T-cell (primary cell): ENCODE measurements at regions of chr1 and their contacts with region 1.

Region 1: GRCh38 chr1:110048923-110049601 is 14.6 kb downstream of the STRIP1 start:
- DNase-seq: no peak
- ATAC-seq: no peak
- H3K4me3 ChIP-seq: no peak overlapping the region
- H3K4me3 Mint-ChIP-seq: no peak overlapping the region
- H3K27ac ChIP-seq: no peak overlapping the region
- H3K27ac Mint-ChIP-seq: no peak overlapping the region
- H3K4me1 ChIP-seq: no peaks in the 10 kb centered on the region
- H3K4me1 Mint-ChIP-seq: peaks cover 1 to 10% (median 1%) of the 10 kb centered on the region in 3 donors
- H3K27me3 ChIP-seq: no peaks in the 10 kb centered on the region
- H3K27me3 Mint-ChIP-seq: no peaks in the 10 kb centered on the region

Region 2: DNA sequence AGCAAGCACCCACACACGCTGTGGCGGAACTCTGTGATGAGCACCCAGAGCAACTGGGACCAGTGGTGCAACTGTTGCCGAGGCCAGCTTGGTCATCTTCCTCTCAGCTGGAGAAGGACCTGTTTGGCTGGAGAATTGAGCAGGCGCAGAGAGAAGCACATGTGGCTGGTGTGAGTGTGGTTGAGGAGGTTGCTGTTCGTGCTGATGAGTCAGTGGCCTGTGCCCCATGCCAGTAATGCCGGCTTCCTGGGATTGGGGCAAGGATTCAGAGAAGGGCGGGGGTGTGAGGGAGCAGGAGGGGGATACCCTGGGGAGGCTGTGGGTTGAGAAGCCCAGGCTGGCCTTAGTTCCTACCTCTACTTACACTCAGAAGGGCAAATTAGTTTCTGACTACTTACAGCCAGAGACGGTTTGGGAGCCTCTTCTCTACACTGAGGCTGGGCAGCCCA is 227.8 kb before region 1 on chr1:
- CTCF ChIA-PET with region 1: no interaction called
- POLR2A ChIA-PET with region 1: no interaction called
- DNase-seq: peak in 1 of 35 experiments; percentile 30
- ATAC-seq: no peak
- H3K4me3 ChIP-seq: no peak overlapping the region
- H3K4me3 Mint-ChIP-seq: no peak overlapping the region
- H3K27ac ChIP-seq: no peak overlapping the region
- H3K27ac Mint-ChIP-seq: no peak overlapping the region
- H3K4me1 ChIP-seq: peaks cover 0 to 41% of the 10 kb centered on the region in 2 experiments
- H3K4me1 Mint-ChIP-seq: peaks cover 6 to 16% (median 15%) of the 10 kb centered on the region in 3 donors
- H3K27me3 ChIP-seq: peaks cover 0 to 6% of the 10 kb centered on the region in 2 experiments
- H3K27me3 Mint-ChIP-seq: no peaks in the 10 kb centered on the region

Region 3: GRCh38 chr1:110034451-110035235 is 14.4 kb before region 1 on chr1 and contains the start of gene STRIP1:
- CTCF ChIA-PET with region 1: interaction called, 4 to 7 read pairs
- POLR2A ChIA-PET with region 1: interaction called in 1 of 2 experiments, 15 read pairs
- DNase-seq: peak; percentile 80 to 97 (median 91)
- ATAC-seq: peak; percentile 96 to 97 (median 96)
- H3K4me3 ChIP-seq: peak within 1 kb of the TSS; percentile 91 to 93
- H3K4me3 Mint-ChIP-seq: peak within 1 kb of the TSS; percentile 84 to 96 (median 92)
- H3K27ac ChIP-seq: peak within 1 kb of the TSS; percentile 67
- H3K27ac Mint-ChIP-seq: peak within 1 kb of the TSS; percentile 85 to 93
- H3K4me1 ChIP-seq: peaks cover 18 to 40% of the 10 kb centered on the region in 2 experiments
- H3K4me1 Mint-ChIP-seq: peaks cover 52 to 65% (median 53%) of the 10 kb centered on the region in 3 donors
- H3K27me3 ChIP-seq: no peaks in the 10 kb centered on the region
- H3K27me3 Mint-ChIP-seq: no peaks in the 10 kb centered on the region
- total RNA-seq, gene STRIP1: 70.6 to 87.2 (median 73.3) TPM

Region 4: GRCh38 chr1:110060034-110060661 is 11.1 kb after region 1 on chr1:
- CTCF ChIA-PET with region 1: interaction called, 3 to 12 read pairs
- POLR2A ChIA-PET with region 1: interaction called in 1 of 2 experiments, 5 read pairs
- DNase-seq: peak; percentile 21 to 80 (median 61)
- ATAC-seq: peak; percentile 61 to 72 (median 68)
- H3K4me3 ChIP-seq: no peak overlapping the region
- H3K4me3 Mint-ChIP-seq: no peak overlapping the region
- H3K27ac ChIP-seq: no peak overlapping the region
- H3K27ac Mint-ChIP-seq: no peak overlapping the region
- H3K4me1 ChIP-seq: no peaks in the 10 kb centered on the region
- H3K4me1 Mint-ChIP-seq: peaks cover 0 to 4% (median 0%) of the 10 kb centered on the region in 3 donors
- H3K27me3 ChIP-seq: peaks cover 0 to 12% of the 10 kb centered on the region in 2 experiments
- H3K27me3 Mint-ChIP-seq: no peaks in the 10 kb centered on the region

Region 5: GRCh38 chr1:110787328-110788071 is 738.4 kb after region 1 on chr1:
- CTCF ChIA-PET with region 1: no interaction called
- POLR2A ChIA-PET with region 1: interaction called in 1 of 2 experiments, 11 read pairs
- DNase-seq: peak in 28 of 35 experiments; percentile 5 to 73 (median 33)
- ATAC-seq: peak; percentile 80 to 89 (median 86)
- H3K4me3 ChIP-seq: peak overlapping the region; percentile 25 to 30
- H3K4me3 Mint-ChIP-seq: peak overlapping the region; percentile 26 to 66 (median 53)
- H3K27ac ChIP-seq: peak overlapping the region; percentile 57
- H3K27ac Mint-ChIP-seq: peak overlapping the region; percentile 87 to 88
- H3K4me1 ChIP-seq: peaks cover 28 to 53% of the 10 kb centered on the region in 2 experiments
- H3K4me1 Mint-ChIP-seq: peaks cover 61 to 70% (median 67%) of the 10 kb centered on the region in 3 donors
- H3K27me3 ChIP-seq: no peaks in the 10 kb centered on the region
- H3K27me3 Mint-ChIP-seq: no peaks in the 10 kb centered on the region